Cardiac septum (tissue), 1 donor: ENCODE measurements at regions of chr15 and their contacts with region 1.

Region 1: GRCh38 chr15:35362195-35362829 is 183.7 kb downstream of the DPH6 start:
- DNase-seq: no peak

Region 2: DNA sequence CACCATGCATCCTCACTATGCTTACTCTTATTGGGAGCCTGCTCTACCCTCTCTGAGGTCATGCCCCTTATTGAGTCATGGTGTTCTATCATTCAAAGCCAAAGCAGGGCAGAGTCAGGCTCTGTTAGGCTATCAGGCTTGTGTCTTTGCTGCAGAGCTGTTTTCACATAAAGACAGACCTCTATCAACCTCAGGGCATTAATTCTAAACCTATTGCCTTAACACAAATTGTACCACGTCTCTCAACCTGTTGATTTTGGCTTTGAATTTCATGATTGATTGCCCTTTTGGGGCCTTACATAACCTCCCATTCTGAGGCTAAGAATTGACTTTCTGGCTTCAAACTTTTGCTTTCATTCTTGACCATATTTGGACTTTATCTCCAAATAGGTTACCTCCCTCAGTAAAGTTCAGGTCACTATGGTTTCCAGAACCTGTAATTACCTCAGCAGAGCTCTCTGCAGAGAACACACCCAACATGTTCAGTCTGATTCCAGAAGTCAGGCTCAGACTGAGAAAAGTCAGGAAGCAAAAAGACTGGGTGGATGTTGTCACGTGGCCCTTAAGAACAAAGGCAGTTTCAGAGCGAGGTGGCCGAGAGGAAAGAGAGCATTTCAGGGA is 55.8 kb before region 1 on chr15:
- intact Hi-C with region 1: loop called (anchors 1 kb)
- DNase-seq: no peak

Region 3: GRCh38 chr15:35784745-35785144 is 422.4 kb after region 1 on chr15:
- intact Hi-C with region 1: loop called (anchors 10 kb)
- DNase-seq: no peak